ENCODE measurements at regions of chr12 and their contacts with region 1.

Region 1: DNA sequence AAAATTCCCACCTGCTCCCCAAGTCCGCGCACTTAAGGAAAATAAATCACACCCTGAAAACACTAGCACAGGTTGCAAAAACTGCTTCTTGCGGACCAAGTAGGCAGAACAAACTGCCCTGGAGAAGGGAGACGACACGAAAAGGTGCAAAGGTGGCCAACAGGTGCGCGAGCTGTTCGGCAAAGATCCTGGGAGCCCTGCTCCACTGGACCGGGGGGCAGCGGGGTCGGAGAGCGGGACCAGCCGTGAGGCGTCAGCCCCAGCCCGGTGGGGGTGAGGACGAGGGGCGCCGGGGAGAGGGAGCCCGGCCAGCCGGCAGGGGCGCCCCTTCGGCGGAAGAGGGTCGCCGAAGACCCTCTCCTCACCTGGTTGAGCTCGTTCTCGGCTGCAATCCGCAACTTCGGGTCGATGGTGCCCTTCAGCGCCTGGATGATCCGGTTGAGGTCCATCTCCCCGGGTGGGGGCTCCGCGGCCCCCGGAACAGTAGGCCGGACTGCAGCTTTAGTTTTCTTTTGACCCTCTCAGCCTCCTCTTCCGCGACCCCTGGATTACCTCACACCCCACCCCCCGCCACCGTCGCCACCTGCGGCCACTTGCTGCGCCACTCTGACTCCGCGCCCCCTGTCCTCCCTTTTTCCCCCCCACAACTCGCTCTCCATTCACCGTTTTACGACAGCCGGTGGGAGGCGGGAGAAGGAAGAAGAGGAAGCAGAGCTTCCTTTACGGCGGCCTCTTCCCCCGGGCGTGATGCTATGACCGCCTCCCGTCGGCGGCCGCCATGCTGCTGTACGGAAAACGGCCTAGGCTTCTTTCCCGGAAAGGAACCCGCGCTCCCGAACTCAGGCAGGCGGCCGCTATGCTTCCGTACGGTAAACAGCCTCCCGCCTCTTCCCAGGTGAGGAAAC is at the start of gene IPO8:
- DNase-seq: peak; percentile 95
- H3K4me3 Mint-ChIP-seq: peak within 1 kb of the TSS; percentile 93
- H3K27ac Mint-ChIP-seq: peak within 1 kb of the TSS; percentile 92
- H3K4me1 Mint-ChIP-seq: peaks cover 30% of the 10 kb centered on the region
- H3K27me3 Mint-ChIP-seq: no peaks in the 10 kb centered on the region
- CTCF ChIP-seq: peak; percentile 48
- total RNA-seq, gene IPO8: 36.3 and 41.7 TPM in 2 replicates

Region 2: GRCh38 chr12:29519585-29520182 is 1175.8 kb before region 1 on chr12:
- CTCF ChIA-PET with region 1: no interaction called
- POLR2A ChIA-PET with region 1: no interaction called
- intact Hi-C with region 1: loop called (anchors 5 kb)
- DNase-seq: peak; percentile 56
- H3K4me3 Mint-ChIP-seq: no peak overlapping the region
- H3K27ac Mint-ChIP-seq: no peak overlapping the region
- H3K4me1 Mint-ChIP-seq: peaks cover 9% of the 10 kb centered on the region
- H3K27me3 Mint-ChIP-seq: no peaks in the 10 kb centered on the region
- CTCF ChIP-seq: peak; percentile 56

Region 3: DNA sequence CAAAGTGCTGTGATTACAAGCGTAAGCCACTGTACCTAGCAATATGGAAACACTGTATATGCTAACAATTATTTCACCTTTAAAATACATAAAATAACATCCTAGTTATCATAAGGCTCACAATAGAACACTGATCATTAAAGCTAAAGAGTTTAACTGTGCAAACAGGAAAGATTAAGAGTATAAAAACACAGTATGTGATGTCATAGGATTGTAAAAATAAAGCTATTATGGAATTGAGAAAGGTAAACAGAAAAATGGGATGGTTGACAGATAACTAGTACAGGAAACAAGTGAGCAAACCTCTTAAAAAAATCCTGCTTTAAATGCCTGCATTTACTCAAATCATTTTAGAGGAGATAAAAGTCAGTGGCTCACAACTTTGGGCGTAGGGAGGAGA is 11.0 kb after region 1 on chr12:
- CTCF ChIA-PET with region 1: interaction called, 7 read pairs
- POLR2A ChIA-PET with region 1: interaction called, 13 read pairs
- intact Hi-C with region 1: no loop called
- DNase-seq: no peak
- H3K4me3 Mint-ChIP-seq: no peak overlapping the region
- H3K27ac Mint-ChIP-seq: no peak overlapping the region
- H3K4me1 Mint-ChIP-seq: peaks cover 6% of the 10 kb centered on the region
- H3K27me3 Mint-ChIP-seq: no peaks in the 10 kb centered on the region
- CTCF ChIP-seq: no peak

Region 4: GRCh38 chr12:30719060-30719459 is 23.6 kb after region 1 on chr12:
- CTCF ChIA-PET with region 1: interaction called, 4 read pairs
- POLR2A ChIA-PET with region 1: interaction called, 32 read pairs
- intact Hi-C with region 1: no loop called
- DNase-seq: peak; percentile 7
- H3K4me3 Mint-ChIP-seq: no peak overlapping the region
- H3K27ac Mint-ChIP-seq: no peak overlapping the region
- H3K4me1 Mint-ChIP-seq: peaks cover 5% of the 10 kb centered on the region
- H3K27me3 Mint-ChIP-seq: no peaks in the 10 kb centered on the region
- CTCF ChIP-seq: no peak

Region 5: DNA sequence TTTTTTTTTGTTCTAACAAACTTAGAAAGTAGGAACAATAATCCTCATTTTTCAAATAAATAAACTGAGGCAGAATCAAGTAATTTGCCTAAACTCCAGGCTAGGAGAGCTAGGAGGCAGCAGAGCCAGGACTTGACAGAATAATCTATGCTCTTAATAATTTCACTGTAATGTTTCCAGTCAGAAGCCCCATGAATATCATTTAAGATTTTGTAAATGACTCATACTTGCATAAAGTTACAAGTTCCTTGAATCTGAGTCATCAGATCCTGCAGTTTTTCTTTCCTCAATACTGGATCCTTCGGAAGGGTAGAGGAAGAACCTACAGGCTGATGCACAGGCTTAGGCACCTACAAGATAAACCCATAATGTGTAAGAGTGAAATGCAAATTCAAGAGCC is 30.3 kb after region 1 on chr12:
- CTCF ChIA-PET with region 1: interaction called, 5 read pairs
- POLR2A ChIA-PET with region 1: interaction called, 32 read pairs
- intact Hi-C with region 1: no loop called
- DNase-seq: peak; percentile 71
- H3K4me3 Mint-ChIP-seq: no peak overlapping the region
- H3K27ac Mint-ChIP-seq: no peak overlapping the region
- H3K4me1 Mint-ChIP-seq: peaks cover 15% of the 10 kb centered on the region
- H3K27me3 Mint-ChIP-seq: no peaks in the 10 kb centered on the region
- CTCF ChIP-seq: no peak

Region 6: GRCh38 chr12:30754709-30755394 is 59.4 kb after region 1 on chr12 and contains the start of gene CAPRIN2:
- CTCF ChIA-PET with region 1: interaction called, 22 read pairs
- POLR2A ChIA-PET with region 1: interaction called, 75 read pairs
- intact Hi-C with region 1: loop called (anchors 2 kb)
- DNase-seq: peak; percentile 93
- H3K4me3 Mint-ChIP-seq: peak within 1 kb of the TSS; percentile 95
- H3K27ac Mint-ChIP-seq: peak within 1 kb of the TSS; percentile 79
- H3K4me1 Mint-ChIP-seq: peaks cover 33% of the 10 kb centered on the region
- H3K27me3 Mint-ChIP-seq: no peaks in the 10 kb centered on the region
- CTCF ChIP-seq: peak; percentile 21
- total RNA-seq, gene CAPRIN2: 33.0 and 33.3 TPM in 2 replicates

Region 7: DNA sequence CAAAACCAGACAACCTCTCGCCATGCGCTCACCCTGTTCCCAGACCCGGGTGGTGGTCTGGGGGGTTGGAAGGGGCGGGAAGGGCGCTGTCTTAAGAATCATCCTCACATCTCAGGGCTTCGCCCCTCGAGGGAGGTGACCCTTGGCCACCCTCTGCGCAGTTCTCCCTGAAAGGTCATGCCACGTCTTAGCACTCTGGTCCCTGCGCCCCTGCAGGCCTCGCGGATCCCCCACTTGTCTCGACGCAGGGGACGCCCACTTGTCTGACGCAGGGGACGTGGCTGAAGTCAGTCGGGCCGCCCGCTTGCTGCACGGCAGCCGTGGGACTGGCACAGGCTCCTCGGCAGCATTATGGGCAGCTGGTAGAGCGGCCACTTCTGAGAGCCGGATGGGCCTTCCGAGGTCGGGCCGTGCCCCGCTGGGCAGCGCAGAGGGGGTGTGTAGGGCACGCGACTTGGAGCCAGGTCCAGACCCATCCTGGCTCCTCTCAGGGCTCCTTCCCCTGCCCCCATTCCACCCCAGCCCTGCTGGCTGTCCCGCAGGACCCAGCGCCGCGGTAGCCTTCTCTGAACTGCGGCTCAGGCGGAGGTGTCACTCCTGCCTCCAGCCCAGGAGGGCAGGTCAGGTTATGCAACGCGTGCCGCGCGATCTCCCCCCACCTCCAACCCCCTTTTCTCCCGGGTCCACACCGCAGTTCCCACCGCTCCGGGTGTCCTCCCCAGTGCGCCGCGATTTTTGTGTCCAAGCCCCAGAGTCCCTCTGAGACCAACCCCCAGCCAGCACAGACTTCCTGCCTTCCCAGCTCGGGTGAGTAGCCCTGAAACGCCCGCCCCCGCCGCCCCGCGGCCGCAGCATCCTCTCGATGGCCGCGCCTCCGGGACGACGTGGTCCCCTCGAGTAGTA is 100.2 kb after region 1 on chr12:
- CTCF ChIA-PET with region 1: interaction called, 4 read pairs
- POLR2A ChIA-PET with region 1: interaction called, 36 read pairs
- intact Hi-C with region 1: loop called (anchors 1 kb)
- DNase-seq: peak; percentile 83
- H3K4me3 Mint-ChIP-seq: peak overlapping the region; percentile 79
- H3K27ac Mint-ChIP-seq: peak overlapping the region; percentile 67
- H3K4me1 Mint-ChIP-seq: peaks cover 49% of the 10 kb centered on the region
- H3K27me3 Mint-ChIP-seq: no peaks in the 10 kb centered on the region
- CTCF ChIP-seq: no peak

Region 8: DNA sequence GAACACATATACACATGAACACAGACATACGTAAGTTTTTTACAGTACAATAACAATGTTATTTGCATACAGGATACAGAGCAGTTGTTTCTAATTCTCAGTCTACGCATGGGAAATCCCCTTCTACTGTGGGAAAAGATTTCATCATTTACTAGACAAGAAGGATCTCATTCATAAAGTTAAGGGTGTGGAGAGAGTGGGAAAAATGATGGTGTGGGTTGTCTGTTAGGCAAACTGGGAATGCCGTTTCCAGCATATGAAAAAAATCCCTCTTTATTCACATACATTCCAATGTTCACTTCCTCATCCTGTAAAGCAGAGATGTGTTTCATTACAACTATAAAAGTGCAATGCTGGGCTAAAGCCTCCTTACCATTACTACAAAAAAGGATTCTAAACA is 509.6 kb after region 1 on chr12:
- CTCF ChIA-PET with region 1: no interaction called
- POLR2A ChIA-PET with region 1: no interaction called
- intact Hi-C with region 1: no loop called
- DNase-seq: peak; percentile 74
- H3K4me3 Mint-ChIP-seq: no peak overlapping the region
- H3K27ac Mint-ChIP-seq: no peak overlapping the region
- H3K4me1 Mint-ChIP-seq: peaks cover 37% of the 10 kb centered on the region
- H3K27me3 Mint-ChIP-seq: peaks cover 14% of the 10 kb centered on the region
- CTCF ChIP-seq: no peak

Measured in MCF 10A (cell line).